Activated CD4-positive, alpha-beta T cell treated with anti-CD3 and anti-CD28 coated beads for 36 hours (primary cell): ENCODE measurements at regions of chr11 and their contacts with region 1.

Region 1: GRCh38 chr11:13837286-13837685 is 125.2 kb upstream of the SPON1 start:
- DNase-seq: peak; percentile 15
- ATAC-seq: peak; percentile 84
- H3K4me3 Mint-ChIP-seq: no peak overlapping the region
- H3K27ac Mint-ChIP-seq: no peak overlapping the region
- H3K4me1 Mint-ChIP-seq: peaks cover 15% of the 10 kb centered on the region
- H3K27me3 Mint-ChIP-seq: no peaks in the 10 kb centered on the region

Region 2: DNA sequence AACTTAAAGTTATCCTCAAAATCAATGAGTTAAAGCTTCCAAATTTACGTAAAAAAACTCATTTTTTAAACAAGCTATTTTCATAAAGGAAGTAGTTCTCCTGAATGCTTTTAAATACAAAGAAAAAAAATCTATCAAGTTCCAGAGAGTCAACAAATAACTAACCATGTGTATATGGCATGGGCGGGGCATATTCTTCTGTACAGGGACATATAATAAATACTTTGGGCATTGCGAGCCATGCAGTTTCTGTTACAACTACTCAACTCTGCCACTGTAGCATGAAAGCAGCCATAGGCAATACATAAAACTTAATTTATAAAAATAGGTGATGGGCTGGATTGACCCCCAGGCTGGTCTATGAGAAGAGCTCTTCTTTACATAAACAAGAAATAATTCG is 432.1 kb before region 1 on chr11:
- CTCF ChIA-PET with region 1: no interaction called
- POLR2A ChIA-PET with region 1: no interaction called
- intact Hi-C with region 1: no loop called
- DNase-seq: no peak
- ATAC-seq: no peak
- H3K4me3 Mint-ChIP-seq: no peak overlapping the region
- H3K27ac Mint-ChIP-seq: no peak overlapping the region
- H3K4me1 Mint-ChIP-seq: no peaks in the 10 kb centered on the region
- H3K27me3 Mint-ChIP-seq: no peaks in the 10 kb centered on the region

Region 3: GRCh38 chr11:13734530-13734929 is 102.8 kb before region 1 on chr11:
- CTCF ChIA-PET with region 1: no interaction called
- POLR2A ChIA-PET with region 1: no interaction called
- intact Hi-C with region 1: no loop called
- DNase-seq: no peak
- ATAC-seq: no peak
- H3K4me3 Mint-ChIP-seq: no peak overlapping the region
- H3K27ac Mint-ChIP-seq: no peak overlapping the region
- H3K4me1 Mint-ChIP-seq: no peaks in the 10 kb centered on the region
- H3K27me3 Mint-ChIP-seq: peaks cover 1% of the 10 kb centered on the region

Region 4: GRCh38 chr11:13868710-13869397 is 31.6 kb after region 1 on chr11:
- CTCF ChIA-PET with region 1: no interaction called
- POLR2A ChIA-PET with region 1: no interaction called
- intact Hi-C with region 1: loop called in 1 of 2 experiments (anchors 1 kb)
- DNase-seq: peak; percentile 30
- ATAC-seq: peak; percentile 96
- H3K4me3 Mint-ChIP-seq: peak overlapping the region; percentile 10
- H3K27ac Mint-ChIP-seq: peak overlapping the region; percentile 91
- H3K4me1 Mint-ChIP-seq: peaks cover 35% of the 10 kb centered on the region
- H3K27me3 Mint-ChIP-seq: no peaks in the 10 kb centered on the region